ENCODE measurements at regions of chr16 and their contacts with region 1.

Region 1: GRCh38 chr16:56191156-56191815 is at the start of gene GNAO1:
- DNase-seq: peak; percentile 51
- ATAC-seq: peak; percentile 90
- H3K4me3 ChIP-seq: peak within 1 kb of the TSS; percentile 55
- H3K27ac ChIP-seq: no peak within 1 kb of the TSS
- H3K4me1 ChIP-seq: no peaks in the 10 kb centered on the region; the same call in 1 of the 2 replicates
- H3K27me3 ChIP-seq: peaks cover 55% of the 10 kb centered on the region
- CTCF ChIP-seq: no peak
- POLR2A ChIP-seq: no peak
- RAD21 ChIP-seq: no peak
- total RNA-seq, gene GNAO1: under 0.01 TPM in 1 of 2 replicates, not detected in the other

Region 2: DNA sequence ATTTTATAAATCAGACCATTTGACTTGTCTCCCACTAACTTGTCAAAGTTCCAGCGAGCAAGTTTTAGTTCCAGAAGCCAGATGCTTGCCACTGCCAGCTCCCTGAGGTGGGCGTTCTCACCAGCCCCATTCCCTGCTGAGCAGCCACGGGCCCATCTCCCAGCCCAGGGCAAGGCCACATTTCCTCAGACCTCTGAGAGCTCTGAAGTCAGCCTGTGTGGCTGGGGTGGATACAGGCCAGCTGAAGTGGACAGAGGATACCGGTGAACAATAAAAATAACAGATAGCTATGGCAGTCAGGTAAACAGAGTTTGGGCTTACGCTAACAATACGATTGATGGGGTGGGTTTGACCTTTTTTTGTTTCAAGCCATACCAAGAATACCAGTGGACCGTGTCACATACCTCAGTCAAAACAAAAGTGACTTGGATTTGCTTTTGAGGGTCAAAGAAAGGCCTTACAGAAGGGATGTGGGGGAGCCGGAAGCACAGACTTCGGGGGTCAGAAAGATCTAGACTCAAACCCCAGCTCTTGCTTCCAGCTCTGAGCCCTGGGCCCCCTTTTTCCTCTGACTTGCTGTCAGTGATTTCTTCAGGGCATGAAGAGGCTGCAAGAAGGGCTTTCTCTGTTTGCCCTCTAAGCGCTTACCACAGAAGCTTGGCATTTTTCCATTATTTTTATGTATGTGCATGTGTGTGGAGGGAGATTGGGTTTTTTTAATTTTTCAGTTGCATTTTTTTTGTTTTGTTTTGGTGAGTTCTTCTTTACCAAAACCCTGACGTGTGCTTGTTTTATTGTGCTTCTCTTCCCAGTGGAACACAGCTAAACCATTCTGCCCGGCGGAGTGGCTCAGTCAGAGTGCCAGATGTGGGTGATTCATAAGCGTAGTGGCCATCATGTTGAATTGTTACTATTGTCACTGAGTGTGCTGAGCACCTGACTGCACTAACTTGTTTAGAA is 109.9 kb after region 1 on chr16:
- CTCF ChIA-PET with region 1: no interaction called
- POLR2A ChIA-PET with region 1: no interaction called
- dilution Hi-C with region 1: no loop called
- in situ Hi-C with region 1: no loop called
- intact Hi-C with region 1: loop called (anchors 5 kb)
- DNase-seq: peak; percentile 46
- ATAC-seq: peak; percentile 51
- H3K4me3 ChIP-seq: no peak overlapping the region
- H3K27ac ChIP-seq: no peak overlapping the region
- H3K4me1 ChIP-seq: peaks cover 7% of the 10 kb centered on the region
- H3K27me3 ChIP-seq: peaks cover 23% of the 10 kb centered on the region; the same call in 1 of the 2 replicates
- CTCF ChIP-seq: no peak
- POLR2A ChIP-seq: no peak
- RAD21 ChIP-seq: no peak

Region 3: GRCh38 chr16:57147381-57148221 is 956.3 kb after region 1 on chr16:
- CTCF ChIA-PET with region 1: no interaction called
- POLR2A ChIA-PET with region 1: no interaction called
- dilution Hi-C with region 1: no loop called
- in situ Hi-C with region 1: no loop called
- intact Hi-C with region 1: no loop called
- DNase-seq: peak; percentile 46
- ATAC-seq: peak; percentile 40
- H3K4me3 ChIP-seq: no peak overlapping the region
- H3K27ac ChIP-seq: no peak overlapping the region
- H3K4me1 ChIP-seq: peaks cover 6% of the 10 kb centered on the region; the same call in 1 of the 2 replicates
- H3K27me3 ChIP-seq: no peaks in the 10 kb centered on the region
- CTCF ChIP-seq: no peak
- POLR2A ChIP-seq: no peak
- RAD21 ChIP-seq: no peak